Activated CD4-positive, alpha-beta memory T cell treated with anti-CD3 and anti-CD28 coated beads for 36 hours (primary cell): ENCODE measurements at regions of chr19 and their contacts with region 1.

Region 1: DNA sequence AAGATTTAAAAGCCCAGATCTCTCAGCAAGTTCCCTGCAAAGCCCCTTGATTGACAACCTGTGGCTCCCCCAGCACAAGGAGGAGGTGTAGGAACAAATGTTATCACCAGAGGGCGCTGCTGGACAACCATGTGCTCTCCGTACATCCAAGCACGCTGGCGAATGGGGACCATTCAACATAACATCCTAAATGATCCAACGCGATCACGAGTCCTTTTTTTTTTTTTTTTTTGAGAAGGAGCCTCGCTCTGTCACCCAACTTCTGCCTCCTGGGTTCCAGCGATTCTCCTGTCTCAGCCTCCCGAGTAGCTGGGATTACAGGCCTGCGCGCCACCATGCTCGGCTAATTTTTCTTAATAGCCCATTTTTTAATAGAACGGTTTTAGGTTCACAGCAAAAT is 52.0 kb downstream of the NWD1 start:
- DNase-seq: peak; percentile 81
- H3K4me3 Mint-ChIP-seq: no peak overlapping the region
- H3K27ac Mint-ChIP-seq: no peak overlapping the region
- H3K4me1 Mint-ChIP-seq: no peaks in the 10 kb centered on the region
- H3K27me3 Mint-ChIP-seq: peaks cover 20% of the 10 kb centered on the region

Region 2: GRCh38 chr19:16751733-16752132 is 19.9 kb before region 1 on chr19:
- CTCF ChIA-PET with region 1: no interaction called
- POLR2A ChIA-PET with region 1: no interaction called
- intact Hi-C with region 1: no loop called
- DNase-seq: no peak
- H3K4me3 Mint-ChIP-seq: no peak overlapping the region
- H3K27ac Mint-ChIP-seq: no peak overlapping the region
- H3K4me1 Mint-ChIP-seq: no peaks in the 10 kb centered on the region
- H3K27me3 Mint-ChIP-seq: peaks cover 9% of the 10 kb centered on the region

Region 3: GRCh38 chr19:16899566-16900075 is 128.0 kb after region 1 on chr19:
- CTCF ChIA-PET with region 1: interaction called, 8 read pairs
- POLR2A ChIA-PET with region 1: no interaction called
- intact Hi-C with region 1: loop called (anchors 1 kb)
- DNase-seq: peak; percentile 62
- H3K4me3 Mint-ChIP-seq: no peak overlapping the region
- H3K27ac Mint-ChIP-seq: no peak overlapping the region
- H3K4me1 Mint-ChIP-seq: peaks cover 15% of the 10 kb centered on the region
- H3K27me3 Mint-ChIP-seq: peaks cover 12% of the 10 kb centered on the region

Region 4: DNA sequence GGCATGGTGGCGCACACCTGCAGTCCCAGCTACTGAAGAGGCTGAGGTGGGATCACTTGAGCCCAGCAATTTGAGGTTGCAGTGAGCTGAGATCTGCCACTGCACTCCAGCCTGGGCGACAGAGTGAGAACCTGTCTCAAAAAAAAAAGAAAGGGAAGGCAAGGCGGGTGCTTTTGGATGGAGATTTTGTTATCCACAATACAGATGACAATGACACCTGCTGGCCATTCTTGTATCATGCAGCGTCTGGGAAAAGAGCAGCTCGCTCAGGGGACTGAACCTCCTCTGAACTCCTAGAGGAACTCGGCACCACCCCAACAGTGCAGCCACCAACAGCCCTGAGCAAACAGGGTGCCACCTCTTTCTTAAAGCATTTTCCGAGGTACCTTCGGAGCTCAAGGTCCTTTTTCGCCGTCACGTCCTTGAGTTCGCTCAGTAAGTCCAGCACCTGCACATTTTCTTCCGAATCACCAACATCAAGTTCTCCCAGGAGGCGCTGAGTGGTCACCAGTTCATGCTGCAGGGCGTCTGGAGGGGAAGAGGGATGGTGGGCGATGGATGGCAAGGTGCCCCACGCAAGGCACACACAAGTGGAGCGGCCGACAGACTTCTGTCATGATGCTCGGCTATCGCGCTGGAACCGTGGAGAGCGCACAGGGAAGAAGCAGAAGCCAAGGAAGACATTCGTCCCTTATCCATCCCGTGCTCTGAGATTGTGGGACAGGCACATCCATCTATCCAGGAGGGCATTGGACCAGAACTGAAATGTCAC is 281.0 kb after region 1 on chr19:
- CTCF ChIA-PET with region 1: interaction called, 14 read pairs
- POLR2A ChIA-PET with region 1: no interaction called
- intact Hi-C with region 1: loop called (anchors 2 kb)
- DNase-seq: peak; percentile 31
- H3K4me3 Mint-ChIP-seq: no peak overlapping the region
- H3K27ac Mint-ChIP-seq: no peak overlapping the region
- H3K4me1 Mint-ChIP-seq: no peaks in the 10 kb centered on the region
- H3K27me3 Mint-ChIP-seq: no peaks in the 10 kb centered on the region